Activated T-helper 1 cell treated with anti-CD3 and anti-CD28 coated beads, Interleukin-12 subunit alpha, Interleukin-12 subunit beta, Interleukin-2, Interleukin-4 antibody, amounts not matched to agents 30 ng/mL and 10 ng/mL and 1 ng/mL, durations not matched to agents 14 hours and 24 hours and 36 hours (primary cell): ENCODE measurements at regions of chr2 and their contacts with region 1.

Region 1: DNA sequence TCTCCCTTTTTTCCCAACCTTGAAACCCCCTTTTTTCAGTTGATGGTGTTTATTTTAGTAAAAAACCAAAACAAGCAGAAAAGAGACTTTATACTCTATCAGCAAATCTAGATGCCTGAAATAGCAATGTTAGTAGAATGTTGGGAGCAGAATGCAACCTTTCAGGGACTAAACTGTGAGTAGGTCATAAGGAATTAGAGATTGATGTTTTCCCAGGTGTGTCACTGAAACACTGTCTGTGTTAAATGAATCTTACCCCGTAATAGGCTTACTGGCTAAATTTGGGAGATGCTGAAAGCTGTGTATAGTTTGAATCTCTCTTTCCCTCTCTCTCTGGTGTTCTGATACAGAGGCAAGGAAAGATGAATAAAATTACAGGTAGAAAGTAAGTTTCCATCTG is 43.8 kb downstream of the AGFG1 start:
- DNase-seq: no peak
- H3K4me3 Mint-ChIP-seq: no peak overlapping the region
- H3K27ac Mint-ChIP-seq: no peak overlapping the region
- H3K4me1 Mint-ChIP-seq: peaks cover 27% of the 10 kb centered on the region
- H3K27me3 Mint-ChIP-seq: no peaks in the 10 kb centered on the region

Region 2: DNA sequence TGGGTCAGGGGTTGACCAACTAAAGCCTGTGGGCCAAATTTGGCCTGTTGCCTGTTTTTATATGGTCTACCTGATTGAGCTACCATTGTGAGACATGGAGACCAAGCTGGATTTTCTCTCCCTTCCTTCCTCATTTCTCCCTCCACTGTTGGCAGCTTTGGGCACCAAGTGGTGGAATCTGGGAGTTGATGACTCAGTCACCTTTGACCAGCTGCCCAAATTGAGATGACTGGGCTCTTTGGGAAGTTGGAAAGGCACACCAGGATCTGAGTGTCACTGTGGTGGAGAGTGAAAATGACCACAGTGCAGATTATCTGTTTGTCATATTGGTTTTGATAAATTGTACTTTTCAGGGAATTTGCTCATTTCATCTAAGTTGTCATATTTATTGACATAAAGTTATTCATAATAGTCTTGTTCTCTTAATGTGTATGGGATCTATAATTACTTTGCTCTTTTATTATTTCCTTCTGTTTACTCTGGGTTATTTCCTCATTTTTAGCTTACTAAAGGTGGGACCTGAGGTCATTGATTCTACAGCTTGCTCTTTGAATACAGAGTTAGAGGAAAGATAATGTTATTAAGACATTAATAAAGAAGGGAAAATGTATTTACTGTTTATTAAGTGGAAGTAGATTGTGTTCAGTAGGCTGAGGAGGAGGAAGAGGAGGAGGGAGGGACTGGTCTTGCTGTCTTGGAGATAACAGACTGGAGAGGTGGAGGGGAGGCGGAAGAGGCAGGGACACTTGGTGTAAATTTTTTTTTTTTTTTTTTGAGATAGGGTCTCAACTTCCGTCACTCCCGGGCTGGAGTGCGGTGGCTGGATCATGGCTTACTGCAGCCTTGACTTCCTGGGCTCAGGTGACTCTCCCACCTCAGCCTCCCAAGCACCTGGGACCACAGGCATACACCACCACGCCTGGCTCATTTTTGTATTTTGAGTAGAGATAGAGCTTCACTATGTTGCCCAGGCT is 12.0 kb before region 1 on chr2:
- intact Hi-C with region 1: loop called (anchors 2 kb)
- DNase-seq: no peak
- H3K4me3 Mint-ChIP-seq: no peak overlapping the region
- H3K27ac Mint-ChIP-seq: no peak overlapping the region
- H3K4me1 Mint-ChIP-seq: peaks cover 45% of the 10 kb centered on the region
- H3K27me3 Mint-ChIP-seq: no peaks in the 10 kb centered on the region